AG04449 (cell line): ENCODE measurements at regions of chr21 and their contacts with region 1.

Region 1: GRCh38 chr21:41133896-41134522 is 34.0 kb upstream of the BACE2 start:
- DNase-seq: no peak
- H3K4me3 ChIP-seq: no peak overlapping the region
- CTCF ChIP-seq: peak; percentile 60

Region 2: GRCh38 chr21:40143822-40144525 is 990.0 kb before region 1 on chr21:
- CTCF ChIA-PET with region 1: interaction called, 15 read pairs
- POLR2A ChIA-PET with region 1: no interaction called
- DNase-seq: no peak
- H3K4me3 ChIP-seq: no peak overlapping the region
- CTCF ChIP-seq: peak; percentile 40

Region 3: GRCh38 chr21:41112740-41113692 is 21.0 kb before region 1 on chr21:
- CTCF ChIA-PET with region 1: interaction called, 148 read pairs
- POLR2A ChIA-PET with region 1: no interaction called
- DNase-seq: peak; percentile 92
- H3K4me3 ChIP-seq: peak overlapping the region; percentile 55
- CTCF ChIP-seq: no peak

Region 4: DNA sequence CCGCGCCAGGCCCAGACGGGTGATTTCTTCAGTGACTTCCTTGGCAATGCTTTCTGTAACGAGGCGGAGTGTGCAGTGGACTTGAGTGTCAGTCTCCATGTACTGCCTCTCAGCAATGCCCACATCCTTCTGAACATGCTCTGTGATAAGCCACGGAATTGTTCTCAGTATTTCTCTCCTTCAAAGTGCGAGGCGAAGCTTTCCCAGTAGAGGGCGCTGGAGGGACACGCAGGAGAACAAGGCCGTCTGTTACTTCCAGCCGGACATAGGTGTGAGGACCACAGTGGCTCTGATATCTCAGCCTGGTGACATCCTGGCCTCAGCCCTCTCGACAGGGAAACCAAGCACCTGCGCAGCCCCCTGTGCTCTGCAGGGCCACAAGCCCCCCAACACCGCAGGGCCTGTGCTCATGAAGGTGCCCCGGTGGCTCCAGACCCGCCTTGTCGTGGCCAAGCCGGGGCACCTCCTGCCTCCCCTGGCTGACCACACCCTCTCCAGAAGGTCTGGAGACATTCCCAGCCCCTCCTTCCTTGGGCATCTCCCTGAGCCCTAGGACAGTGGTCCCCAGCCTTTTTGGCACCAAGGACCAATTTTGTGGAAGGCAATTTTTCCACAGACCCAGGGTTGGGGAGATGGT is 12.1 kb before region 1 on chr21:
- CTCF ChIA-PET with region 1: interaction called, 148 read pairs
- POLR2A ChIA-PET with region 1: interaction called, 3 read pairs
- DNase-seq: peak; percentile 29
- H3K4me3 ChIP-seq: no peak overlapping the region
- CTCF ChIP-seq: peak; percentile 92

Region 5: GRCh38 chr21:41147436-41148355 is 13.7 kb after region 1 on chr21:
- CTCF ChIA-PET with region 1: interaction called, 15 read pairs
- POLR2A ChIA-PET with region 1: no interaction called
- DNase-seq: no peak
- H3K4me3 ChIP-seq: no peak overlapping the region
- CTCF ChIP-seq: no peak